BJ (cell line): ENCODE measurements at regions of chr7 and their contacts with region 1.

Region 1: DNA sequence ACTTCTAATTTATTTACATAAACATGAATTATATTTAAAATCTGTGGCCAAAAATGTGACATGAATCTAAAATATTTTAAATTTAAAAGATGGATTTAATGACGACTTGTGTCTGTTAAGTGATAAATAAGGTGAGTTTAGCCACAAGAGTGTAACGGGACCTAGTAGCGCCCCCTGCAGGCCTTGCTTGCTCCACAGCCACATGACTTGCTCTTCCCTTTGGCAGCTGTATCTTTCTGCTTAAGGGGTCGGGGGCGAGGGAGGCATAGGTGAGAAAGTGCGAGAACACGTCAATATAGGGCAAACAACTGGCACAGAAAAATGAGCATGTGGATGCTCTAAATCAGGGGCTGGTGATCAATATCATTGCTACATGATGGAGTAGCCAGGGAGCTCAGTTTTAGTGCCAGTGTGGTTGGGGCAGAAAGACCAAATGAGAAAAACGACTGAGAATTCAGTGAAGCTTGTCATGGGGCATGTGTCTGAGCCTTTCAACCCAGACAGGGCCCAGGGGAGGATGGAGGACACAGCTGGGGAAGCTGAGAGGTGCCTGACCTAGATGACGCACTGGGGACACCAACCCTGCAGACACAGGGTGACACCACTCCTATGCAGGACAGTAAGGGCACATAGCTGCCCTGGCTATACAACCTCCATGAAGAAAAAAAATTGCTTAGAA is 49.8 kb downstream of the PAXIP1 start:
- DNase-seq: no peak
- H3K4me3 ChIP-seq: no peak overlapping the region
- H3K27me3 ChIP-seq: no peaks in the 10 kb centered on the region
- CTCF ChIP-seq: peak; percentile 71

Region 2: GRCh38 chr7:154463794-154464193 is 489.4 kb before region 1 on chr7:
- CTCF ChIA-PET with region 1: no interaction called
- POLR2A ChIA-PET with region 1: no interaction called
- DNase-seq: no peak
- H3K4me3 ChIP-seq: no peak overlapping the region
- H3K27me3 ChIP-seq: no peaks in the 10 kb centered on the region
- CTCF ChIP-seq: no peak

Region 3: DNA sequence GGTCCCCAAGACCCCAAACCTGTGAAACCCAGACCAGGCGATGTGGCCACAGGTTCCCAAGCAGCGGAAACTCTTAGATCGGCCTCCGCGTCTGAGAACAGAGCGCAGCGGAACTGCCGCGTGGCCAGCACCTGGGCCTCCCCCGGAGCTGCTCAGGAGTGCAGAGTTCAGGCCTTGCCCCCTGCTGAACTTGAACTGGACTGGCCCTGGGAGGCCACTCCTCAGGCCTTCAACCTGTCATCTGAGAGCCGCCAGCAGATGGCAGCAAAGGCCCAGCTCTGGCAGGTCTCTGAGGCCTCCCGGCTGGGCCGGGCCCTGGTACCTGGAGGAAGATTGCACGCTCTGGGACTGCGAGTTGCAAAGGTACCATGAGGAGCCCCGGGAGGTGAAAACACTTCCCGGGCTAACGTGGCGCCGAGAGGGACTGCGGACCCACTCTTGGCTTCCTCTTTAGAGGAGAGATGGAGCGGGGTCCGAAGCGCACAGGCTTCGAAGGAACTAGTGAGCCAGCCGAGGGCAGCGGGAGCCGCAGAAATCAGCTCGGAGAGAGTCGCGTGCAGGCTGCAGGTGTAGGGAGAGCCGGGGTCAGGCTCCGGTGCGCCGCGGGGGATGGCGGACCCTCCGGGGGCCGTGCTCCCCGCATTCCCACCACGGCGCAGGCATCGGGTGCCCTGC is 39.4 kb before region 1 on chr7:
- CTCF ChIA-PET with region 1: interaction called, 15 read pairs
- POLR2A ChIA-PET with region 1: no interaction called
- DNase-seq: no peak
- H3K4me3 ChIP-seq: peak overlapping the region; percentile 14; the same call in 1 of the 2 replicates
- H3K27me3 ChIP-seq: no peaks in the 10 kb centered on the region; the same call in none of the 2 replicates
- CTCF ChIP-seq: peak; percentile 93

Region 4: GRCh38 chr7:154942691-154943090 is 10.5 kb before region 1 on chr7:
- CTCF ChIA-PET with region 1: interaction called, 16 read pairs
- POLR2A ChIA-PET with region 1: no interaction called
- DNase-seq: no peak
- H3K4me3 ChIP-seq: no peak overlapping the region
- H3K27me3 ChIP-seq: no peaks in the 10 kb centered on the region
- CTCF ChIP-seq: no peak

Region 5: DNA sequence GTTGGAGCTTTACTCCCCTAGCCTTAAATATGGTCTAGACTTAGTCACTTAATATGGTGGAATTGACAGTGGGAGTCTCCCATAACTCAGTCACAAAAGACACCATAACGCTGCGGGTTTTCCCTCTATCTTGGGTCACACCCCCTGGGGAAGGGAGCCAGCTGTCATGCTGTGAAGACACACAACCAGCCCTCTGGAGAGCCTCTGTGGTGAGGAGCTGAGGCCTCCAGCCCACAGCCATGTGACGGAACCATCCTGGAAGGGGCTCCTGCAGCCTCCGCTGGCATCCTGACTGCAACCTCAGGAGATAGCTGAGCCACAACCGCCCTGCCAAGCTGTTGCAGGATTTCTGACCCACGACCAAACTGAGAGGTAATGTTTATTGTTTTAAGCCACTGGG is 11.9 kb after region 1 on chr7:
- CTCF ChIA-PET with region 1: interaction called, 19 read pairs
- POLR2A ChIA-PET with region 1: no interaction called
- DNase-seq: no peak
- H3K4me3 ChIP-seq: no peak overlapping the region
- H3K27me3 ChIP-seq: no peaks in the 10 kb centered on the region
- CTCF ChIP-seq: no peak